OCI-LY7 (cell line): ENCODE measurements at regions of chr18 and their contacts with region 1.

Region 1: DNA sequence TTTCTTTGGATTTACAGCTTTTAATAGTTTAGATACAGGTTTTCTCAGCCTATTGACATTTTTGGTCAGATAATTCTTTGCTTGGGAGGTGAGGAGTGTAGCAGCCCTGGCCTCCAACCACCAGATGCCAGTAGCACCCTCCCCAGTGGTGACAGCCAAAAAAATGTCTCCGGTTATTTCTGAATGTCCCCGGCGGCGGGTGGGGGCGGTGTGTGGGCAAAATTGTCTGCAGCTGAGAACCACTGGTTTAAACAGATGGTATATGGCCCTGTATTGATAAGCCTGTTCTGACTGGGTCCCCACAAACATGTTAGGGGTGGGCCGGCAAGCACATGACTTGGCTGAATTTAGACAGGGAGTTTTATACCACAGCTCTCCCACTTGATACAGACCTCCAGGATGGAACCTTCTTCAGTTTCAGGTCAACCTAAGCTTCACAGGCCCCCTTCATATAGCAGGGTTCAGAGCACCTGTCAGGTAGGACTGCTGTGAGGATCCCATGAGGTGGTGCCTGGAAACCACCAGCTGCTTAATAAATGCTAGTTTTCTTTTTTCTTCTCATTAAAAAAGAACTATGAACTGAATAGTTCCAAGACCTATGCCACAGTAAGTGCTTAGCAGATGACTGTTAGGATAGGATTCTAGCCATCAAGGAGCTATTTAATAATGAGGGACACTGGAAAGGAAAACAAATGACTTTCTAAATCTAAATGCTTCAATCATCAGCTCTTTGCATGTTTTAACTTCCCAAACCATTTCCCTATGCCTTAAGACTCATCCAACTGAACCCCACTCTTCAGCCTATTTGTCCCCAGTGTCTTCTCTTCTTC is 18.1 kb downstream of the LPIN2 start:
- DNase-seq: peak; percentile 69
- H3K4me3 ChIP-seq: no peak overlapping the region
- H3K27ac ChIP-seq: no peak overlapping the region
- H3K4me1 ChIP-seq: peaks cover 22% of the 10 kb centered on the region
- CTCF ChIP-seq: peak; percentile 86

Region 2: GRCh38 chr18:3062798-3063680 is 68.2 kb after region 1 on chr18:
- CTCF ChIA-PET with region 1: interaction called, 3 read pairs
- POLR2A ChIA-PET with region 1: interaction called, 3 read pairs
- intact Hi-C with region 1: loop called (anchors 2 kb)
- DNase-seq: peak; percentile 72
- H3K4me3 ChIP-seq: no peak overlapping the region
- H3K27ac ChIP-seq: no peak overlapping the region
- H3K4me1 ChIP-seq: peaks cover 7% of the 10 kb centered on the region
- CTCF ChIP-seq: peak; percentile 93